ENCODE measurements at regions of chr3 and their contacts with region 1.

Region 1: GRCh38 chr3:152817400-152817799 is 17.5 kb upstream of the P2RY1 start:
- DNase-seq: no peak
- ATAC-seq: no peak
- H3K4me3 ChIP-seq: no peak overlapping the region
- H3K4me3 Mint-ChIP-seq: no peak overlapping the region
- H3K27ac ChIP-seq: no peak overlapping the region
- H3K27ac Mint-ChIP-seq: no peak overlapping the region
- H3K4me1 ChIP-seq: no peaks in the 10 kb centered on the region
- H3K4me1 Mint-ChIP-seq: no peaks in the 10 kb centered on the region
- H3K27me3 ChIP-seq: no peaks in the 10 kb centered on the region
- H3K27me3 Mint-ChIP-seq: no peaks in the 10 kb centered on the region
- CTCF ChIP-seq: no peak

Region 2: DNA sequence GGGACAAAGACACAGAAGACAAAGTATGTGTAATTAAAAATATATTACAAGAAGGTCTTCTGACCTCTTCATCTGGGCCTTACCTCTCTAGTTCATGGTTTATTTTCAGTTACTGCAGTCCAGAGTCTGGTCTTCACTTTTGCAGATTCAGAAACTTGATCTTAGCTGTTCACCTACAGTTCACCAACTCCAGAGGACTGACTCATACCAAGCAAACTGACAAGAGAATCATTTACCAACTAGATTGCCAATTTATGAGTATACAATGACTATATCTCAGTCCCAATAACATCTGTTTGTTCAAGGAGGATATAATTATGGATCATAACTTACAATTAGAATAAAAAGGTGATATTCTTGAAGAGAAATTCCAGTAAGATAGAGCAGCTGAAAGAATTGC is 26.6 kb after region 1 on chr3:
- CTCF ChIA-PET with region 1: no interaction called
- POLR2A ChIA-PET with region 1: no interaction called
- intact Hi-C with region 1: no loop called
- DNase-seq: no peak
- ATAC-seq: no peak
- H3K4me3 ChIP-seq: no peak overlapping the region
- H3K4me3 Mint-ChIP-seq: no peak overlapping the region
- H3K27ac ChIP-seq: no peak overlapping the region
- H3K27ac Mint-ChIP-seq: no peak overlapping the region
- H3K4me1 ChIP-seq: no peaks in the 10 kb centered on the region
- H3K4me1 Mint-ChIP-seq: no peaks in the 10 kb centered on the region
- H3K27me3 ChIP-seq: no peaks in the 10 kb centered on the region
- H3K27me3 Mint-ChIP-seq: peaks cover 8% of the 10 kb centered on the region
- CTCF ChIP-seq: no peak

Region 3: DNA sequence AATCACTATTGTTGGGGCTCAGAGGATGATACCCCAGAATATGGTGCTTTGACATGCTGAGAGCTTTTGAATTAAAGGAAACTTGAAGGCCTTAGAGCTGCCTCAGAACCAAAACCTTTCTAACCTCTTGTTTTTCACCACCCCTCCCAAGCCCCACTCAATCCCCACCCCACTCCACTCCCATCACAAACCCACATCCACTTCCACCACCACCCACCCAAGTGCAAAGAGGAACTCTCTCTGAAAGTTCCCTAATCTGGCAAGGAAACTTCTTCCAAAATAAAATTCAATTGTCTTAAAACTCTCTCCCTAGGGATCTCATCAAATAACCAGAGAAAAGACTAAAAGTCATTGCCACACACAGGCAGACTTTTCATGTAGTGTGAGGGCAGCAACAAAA is 1002.6 kb after region 1 on chr3:
- CTCF ChIA-PET with region 1: no interaction called
- POLR2A ChIA-PET with region 1: no interaction called
- intact Hi-C with region 1: loop called in 1 of 2 experiments (anchors 5 kb)
- DNase-seq: no peak
- ATAC-seq: no peak
- H3K4me3 ChIP-seq: no peak overlapping the region
- H3K4me3 Mint-ChIP-seq: no peak overlapping the region
- H3K27ac ChIP-seq: no peak overlapping the region
- H3K27ac Mint-ChIP-seq: no peak overlapping the region
- H3K4me1 ChIP-seq: no peaks in the 10 kb centered on the region
- H3K4me1 Mint-ChIP-seq: no peaks in the 10 kb centered on the region
- H3K27me3 ChIP-seq: no peaks in the 10 kb centered on the region
- H3K27me3 Mint-ChIP-seq: no peaks in the 10 kb centered on the region
- CTCF ChIP-seq: no peak

Measured in CD4-positive, alpha-beta T cell (primary cell).